ENCODE measurements at regions of chrX and their contacts with region 1.

Region 1: DNA sequence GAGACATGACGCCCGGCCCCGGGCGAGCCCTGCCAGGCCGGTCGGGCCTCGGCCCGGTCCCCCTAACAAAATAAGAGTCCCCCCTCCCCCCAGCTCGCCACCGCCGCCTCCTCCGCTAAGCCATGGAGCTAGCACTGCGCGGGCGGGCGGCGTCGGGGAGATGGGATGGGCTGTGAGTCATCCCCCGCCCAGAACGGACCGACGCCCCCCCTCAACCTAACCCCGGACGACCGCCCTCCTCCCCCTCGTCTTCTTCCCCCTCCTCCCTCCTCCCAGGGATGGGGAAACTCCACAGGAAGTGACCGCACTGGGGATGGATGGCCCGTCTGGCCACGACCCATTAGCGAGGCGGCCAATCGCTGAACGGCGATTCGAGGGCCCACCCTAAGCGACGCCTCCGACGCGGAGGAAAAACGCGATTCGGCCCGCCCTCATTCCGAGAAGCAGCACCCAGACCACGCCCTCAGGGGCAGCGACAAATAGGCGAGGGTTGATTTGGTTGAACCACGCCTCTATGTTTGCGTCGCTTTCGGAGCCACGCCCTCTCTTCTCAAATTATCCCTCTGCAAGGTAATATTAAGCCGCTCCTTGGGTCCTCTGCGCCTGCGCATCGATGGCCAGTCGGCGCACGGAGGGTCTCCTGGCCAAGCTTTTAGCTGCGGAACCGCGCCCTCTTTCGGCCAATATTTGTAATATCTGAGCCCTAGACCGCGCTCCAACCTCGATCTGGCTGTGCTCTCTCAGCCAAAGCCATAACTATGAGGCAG is at the start of gene TFE3:
- DNase-seq: peak; percentile 98
- H3K4me3 Mint-ChIP-seq: peak within 1 kb of the TSS; percentile 93
- H3K27ac Mint-ChIP-seq: peak within 1 kb of the TSS; percentile 94
- H3K4me1 Mint-ChIP-seq: peaks cover 28% of the 10 kb centered on the region
- H3K27me3 Mint-ChIP-seq: no peaks in the 10 kb centered on the region
- total RNA-seq, gene TFE3: 34.7 to 35.5 TPM

Region 2: GRCh38 chrX:48676106-48676892 is 367.1 kb before region 1 on chrX:
- CTCF ChIA-PET with region 1: no interaction called
- intact Hi-C with region 1: loop called (anchors 10 kb)
- DNase-seq: peak; percentile 90
- H3K4me3 Mint-ChIP-seq: peak overlapping the region; percentile 90
- H3K27ac Mint-ChIP-seq: peak overlapping the region; percentile 91
- H3K4me1 Mint-ChIP-seq: peaks cover 25% of the 10 kb centered on the region
- H3K27me3 Mint-ChIP-seq: no peaks in the 10 kb centered on the region

Region 3: GRCh38 chrX:48911412-48912182 is 131.8 kb before region 1 on chrX and contains the start of gene SLC35A2:
- CTCF ChIA-PET with region 1: no interaction called
- intact Hi-C with region 1: loop called (anchors 1 kb)
- DNase-seq: peak; percentile 92
- H3K4me3 Mint-ChIP-seq: peak within 1 kb of the TSS; percentile 95
- H3K27ac Mint-ChIP-seq: peak within 1 kb of the TSS; percentile 99
- H3K4me1 Mint-ChIP-seq: peaks cover 34% of the 10 kb centered on the region
- H3K27me3 Mint-ChIP-seq: peaks cover 9% of the 10 kb centered on the region
- total RNA-seq, gene SLC35A2: 23.9 to 26.7 TPM

Region 4: DNA sequence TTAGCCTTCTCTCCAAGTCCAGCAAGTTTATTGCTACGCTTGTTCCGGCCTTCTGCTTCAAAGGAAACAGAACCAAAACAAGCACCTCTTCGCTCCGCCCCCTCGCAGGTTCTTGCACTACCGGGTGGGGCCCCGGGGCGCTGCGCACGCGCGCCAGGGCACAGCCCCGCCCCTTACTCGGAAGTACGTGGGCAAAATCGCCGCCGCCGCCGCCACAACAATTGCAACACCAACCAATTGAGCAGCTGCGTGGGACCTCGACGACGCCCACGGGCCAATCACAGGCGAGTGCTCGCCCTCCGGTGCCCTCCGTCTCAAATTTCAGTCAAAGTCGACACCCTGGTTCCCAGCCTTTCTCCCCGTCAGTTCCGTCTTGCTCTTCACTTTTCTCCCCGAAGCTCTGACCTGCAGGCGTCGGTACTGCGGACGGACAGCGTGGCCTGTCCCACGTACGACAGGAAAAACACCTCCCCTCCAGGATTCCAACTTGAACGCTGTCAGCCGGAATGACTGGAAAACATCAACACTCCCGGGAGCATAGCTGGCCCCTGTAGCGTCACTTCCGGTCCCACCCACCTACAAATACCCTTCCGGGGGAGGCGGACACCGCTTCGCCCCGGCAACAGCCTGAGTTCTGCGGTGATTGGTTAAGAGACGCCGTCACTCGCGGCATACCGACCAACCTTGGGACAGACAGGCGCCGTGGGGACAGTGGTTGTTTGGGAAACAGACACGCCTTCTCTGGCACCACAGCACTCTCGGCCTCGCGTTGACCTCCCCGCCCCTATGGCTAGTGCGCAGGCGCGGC is 85.4 kb before region 1 on chrX:
- CTCF ChIA-PET with region 1: no interaction called
- intact Hi-C with region 1: loop called (anchors 1 kb)
- DNase-seq: peak; percentile 96
- H3K4me3 Mint-ChIP-seq: peak overlapping the region; percentile 98
- H3K27ac Mint-ChIP-seq: peak overlapping the region; percentile 100
- H3K4me1 Mint-ChIP-seq: peaks cover 47% of the 10 kb centered on the region
- H3K27me3 Mint-ChIP-seq: no peaks in the 10 kb centered on the region

Region 5: DNA sequence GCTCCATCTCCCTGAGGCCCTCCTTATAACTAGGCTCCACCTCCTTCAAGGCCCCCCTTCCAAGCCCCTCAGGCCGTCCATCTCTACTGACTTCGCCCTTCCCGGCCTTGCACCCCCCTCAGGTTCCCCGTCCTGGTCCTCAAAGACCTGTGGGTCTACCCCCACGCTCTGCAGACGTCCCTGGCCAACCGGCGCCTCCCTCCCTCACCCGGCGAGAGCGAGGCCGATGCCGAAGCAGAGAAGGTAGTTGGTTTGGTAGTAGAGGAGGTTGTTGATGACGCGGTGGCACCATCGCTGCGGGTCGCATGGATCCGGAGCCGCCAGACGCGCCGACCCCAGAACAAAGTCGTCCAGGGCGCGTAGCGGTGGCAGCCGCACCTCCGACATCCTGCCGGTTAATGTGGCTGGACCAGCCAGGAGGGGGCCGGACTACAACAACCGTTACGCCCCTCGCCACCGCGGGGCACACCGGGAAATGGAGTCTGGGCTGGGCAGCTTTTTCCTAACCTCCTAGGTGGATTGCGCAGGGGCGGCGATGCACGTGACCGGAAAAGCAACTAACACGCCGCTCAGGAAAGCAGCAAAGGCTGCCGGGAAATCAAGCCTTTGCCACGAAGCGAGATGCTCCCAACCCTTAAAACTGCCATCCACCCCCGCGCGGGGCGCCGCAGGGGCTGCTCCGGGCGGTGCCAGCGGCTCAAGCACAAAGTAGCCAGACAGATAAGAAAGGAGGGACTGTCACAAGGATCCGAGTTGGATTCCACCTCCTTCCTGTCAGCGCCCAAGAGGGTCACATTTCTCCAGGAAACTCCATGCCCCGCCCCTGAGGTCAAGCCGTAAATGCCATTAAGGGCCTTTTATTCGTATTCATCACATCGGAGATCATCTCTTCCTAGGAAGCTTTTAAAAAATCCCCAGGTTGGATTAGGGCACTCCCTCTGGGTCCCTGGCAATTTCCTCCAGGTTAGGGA is 30.5 kb after region 1 on chrX and contains the start of gene PRAF2:
- CTCF ChIA-PET with region 1: no interaction called
- intact Hi-C with region 1: loop called (anchors 1 kb)
- DNase-seq: peak; percentile 94
- H3K4me3 Mint-ChIP-seq: peak within 1 kb of the TSS; percentile 80
- H3K27ac Mint-ChIP-seq: peak within 1 kb of the TSS; percentile 76
- H3K4me1 Mint-ChIP-seq: peaks cover 22% of the 10 kb centered on the region
- H3K27me3 Mint-ChIP-seq: no peaks in the 10 kb centered on the region
- total RNA-seq, gene PRAF2: 14.5 to 14.8 TPM

Region 6: DNA sequence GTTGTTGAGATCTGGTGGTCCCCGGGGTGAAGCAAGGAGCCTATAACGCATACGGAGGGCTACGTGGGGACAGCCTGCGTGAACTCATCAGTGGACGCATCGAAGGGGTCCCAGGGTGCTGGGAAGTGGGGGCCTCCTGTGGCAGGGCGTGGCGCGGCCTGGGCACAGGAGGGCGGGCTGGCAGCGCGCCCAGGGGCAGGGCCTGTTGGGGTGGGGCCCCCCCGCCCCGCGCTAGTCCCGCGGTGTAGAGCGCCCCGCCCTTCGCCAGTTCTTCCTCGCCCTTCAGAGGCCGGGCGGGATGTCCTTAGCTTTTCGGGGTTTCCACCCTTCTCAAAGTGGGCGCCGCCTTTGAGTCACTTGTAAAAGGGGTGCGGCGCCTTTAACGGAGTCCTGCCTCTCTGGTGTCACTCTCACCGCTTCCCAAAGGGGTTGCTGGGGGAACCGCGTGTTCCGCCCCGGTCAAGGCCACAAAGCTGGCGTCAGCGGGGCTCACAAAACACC is 128.9 kb after region 1 on chrX:
- CTCF ChIA-PET with region 1: no interaction called
- intact Hi-C with region 1: loop called (anchors 5 kb)
- DNase-seq: peak; percentile 86
- H3K4me3 Mint-ChIP-seq: peak overlapping the region; percentile 89
- H3K27ac Mint-ChIP-seq: peak overlapping the region; percentile 91
- H3K4me1 Mint-ChIP-seq: peaks cover 27% of the 10 kb centered on the region
- H3K27me3 Mint-ChIP-seq: no peaks in the 10 kb centered on the region